ENCODE measurements at regions of chr12 and their contacts with region 1.

Region 1: DNA sequence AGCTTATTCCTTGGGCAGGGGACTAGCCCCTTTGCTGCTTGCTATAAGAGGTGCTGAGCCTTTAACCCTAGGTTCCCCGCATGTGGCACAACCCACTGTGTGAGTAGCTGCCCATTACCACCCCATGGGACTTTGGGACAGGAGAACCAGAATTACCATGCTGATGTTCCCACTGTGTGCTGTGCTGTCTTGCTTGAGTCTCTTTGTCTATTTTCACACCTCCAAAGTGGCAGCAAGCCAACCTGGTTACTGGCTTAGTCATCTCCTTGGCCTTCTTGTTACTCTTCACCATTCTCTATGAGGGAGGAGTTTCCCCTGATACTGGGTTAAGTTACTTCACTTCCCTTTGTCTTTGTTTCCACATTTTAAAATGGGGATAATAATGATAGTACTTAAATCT is 73.4 kb upstream of the ETV6 start:
- DNase-seq: peak; percentile 67
- H3K4me3 ChIP-seq: no peak overlapping the region
- H3K27ac ChIP-seq: no peak overlapping the region
- H3K4me1 ChIP-seq: peaks cover 0 to 35% (median 25%) of the 10 kb centered on the region in 4 donors
- H3K27me3 ChIP-seq: no peaks in the 10 kb centered on the region
- CTCF ChIP-seq: no peak
- EP300 ChIP-seq: no peak
- POLR2A ChIP-seq: no peak

Region 2: DNA sequence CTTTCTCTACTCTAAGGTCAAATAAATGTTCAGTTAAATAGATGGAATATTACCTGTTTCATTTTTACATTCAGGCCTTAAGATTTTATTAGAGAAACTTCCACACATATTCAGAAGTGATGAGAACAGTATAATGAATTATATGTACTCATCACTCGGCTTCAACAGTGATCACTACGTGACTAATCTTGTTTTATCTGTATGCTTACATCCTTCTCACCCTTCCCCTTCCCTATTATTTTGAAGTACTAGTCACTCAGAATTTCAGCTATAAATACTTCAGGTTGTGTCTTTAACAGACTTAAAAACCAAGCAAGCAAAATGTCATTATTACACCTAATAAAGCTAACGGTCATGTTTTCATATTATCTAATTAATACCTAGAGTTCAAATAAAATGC is 108.3 kb after region 1 on chr12:
- intact Hi-C with region 1: no loop called
- DNase-seq: no peak
- H3K4me3 ChIP-seq: no peak overlapping the region
- H3K27ac ChIP-seq: peak overlapping the region in 3 of 4 donors; percentile 71 to 90 (median 87)
- H3K4me1 ChIP-seq: peaks cover 0 to 85% (median 73%) of the 10 kb centered on the region in 4 donors
- H3K27me3 ChIP-seq: no peaks in the 10 kb centered on the region
- CTCF ChIP-seq: no peak
- EP300 ChIP-seq: no peak
- POLR2A ChIP-seq: no peak

Region 3: DNA sequence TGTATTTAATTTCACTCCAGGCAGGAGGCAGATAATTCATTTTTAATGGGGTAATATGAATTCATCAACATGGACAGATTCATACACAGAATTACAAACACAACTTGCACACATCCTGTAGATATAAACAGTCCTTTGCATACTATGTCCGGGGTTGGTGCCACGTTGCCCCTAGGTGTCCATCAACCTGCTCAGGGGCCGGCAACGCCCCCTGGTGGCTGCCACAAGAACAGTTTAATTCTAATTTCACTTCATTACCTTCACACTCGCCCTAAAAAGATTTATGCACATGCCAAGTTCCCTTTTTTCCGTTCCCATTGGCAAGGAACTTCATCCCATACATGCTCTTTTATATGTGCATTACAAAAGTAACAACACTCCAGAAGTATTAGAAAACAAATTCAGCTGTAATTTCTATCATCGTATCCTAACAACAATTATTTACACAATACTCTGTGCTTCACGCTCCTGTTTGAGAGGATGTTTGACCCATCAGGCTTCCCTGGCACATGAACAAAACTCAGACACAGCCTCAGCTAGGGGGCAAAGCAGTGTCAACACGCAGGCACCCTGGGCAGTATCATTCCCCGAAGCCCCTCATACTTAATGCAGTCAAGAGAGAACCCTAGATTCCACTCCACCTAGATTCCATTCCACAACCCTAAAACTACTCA is 758.4 kb after region 1 on chr12:
- intact Hi-C with region 1: loop called (anchors 10 kb)
- DNase-seq: no peak
- H3K4me3 ChIP-seq: no peak overlapping the region
- H3K27ac ChIP-seq: no peak overlapping the region
- H3K4me1 ChIP-seq: peaks cover 0 to 16% (median 2%) of the 10 kb centered on the region in 4 donors
- H3K27me3 ChIP-seq: no peaks in the 10 kb centered on the region
- CTCF ChIP-seq: peak; percentile 47 to 90 (median 74)
- EP300 ChIP-seq: no peak
- POLR2A ChIP-seq: no peak

Measured in sigmoid colon (tissue), 7 donors.